WTC11 (cell line): ENCODE measurements at regions of chr1 and their contacts with region 1.

Region 1: DNA sequence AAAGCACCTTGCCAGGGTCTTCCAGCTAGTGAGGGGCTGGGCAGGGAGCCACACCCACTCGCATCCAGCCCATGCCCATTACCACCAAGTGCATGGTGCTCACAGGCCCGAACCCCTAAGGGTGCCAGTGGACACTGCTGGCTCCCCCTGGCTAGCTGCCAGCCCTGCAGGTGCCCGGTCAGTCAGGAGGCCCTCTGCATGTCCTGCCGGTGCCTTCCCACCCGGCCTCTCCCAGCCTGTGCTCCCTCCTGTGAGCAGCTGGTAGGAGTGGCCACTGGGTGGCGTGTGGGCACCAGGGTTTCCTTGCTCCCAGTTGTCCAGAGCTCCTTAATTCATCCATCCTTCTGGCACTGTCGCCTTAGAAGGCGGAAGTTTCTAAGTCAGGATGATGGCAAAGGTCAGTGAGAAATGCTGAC is 33.4 kb downstream of the QSOX1 start:
- DNase-seq: peak; percentile 81
- ATAC-seq: peak; percentile 88
- H3K4me3 Mint-ChIP-seq: no peak overlapping the region
- H3K27ac Mint-ChIP-seq: no peak overlapping the region
- H3K4me1 Mint-ChIP-seq: no peaks in the 10 kb centered on the region
- H3K27me3 Mint-ChIP-seq: no peaks in the 10 kb centered on the region
- CTCF ChIP-seq: peak; percentile 79

Region 2: DNA sequence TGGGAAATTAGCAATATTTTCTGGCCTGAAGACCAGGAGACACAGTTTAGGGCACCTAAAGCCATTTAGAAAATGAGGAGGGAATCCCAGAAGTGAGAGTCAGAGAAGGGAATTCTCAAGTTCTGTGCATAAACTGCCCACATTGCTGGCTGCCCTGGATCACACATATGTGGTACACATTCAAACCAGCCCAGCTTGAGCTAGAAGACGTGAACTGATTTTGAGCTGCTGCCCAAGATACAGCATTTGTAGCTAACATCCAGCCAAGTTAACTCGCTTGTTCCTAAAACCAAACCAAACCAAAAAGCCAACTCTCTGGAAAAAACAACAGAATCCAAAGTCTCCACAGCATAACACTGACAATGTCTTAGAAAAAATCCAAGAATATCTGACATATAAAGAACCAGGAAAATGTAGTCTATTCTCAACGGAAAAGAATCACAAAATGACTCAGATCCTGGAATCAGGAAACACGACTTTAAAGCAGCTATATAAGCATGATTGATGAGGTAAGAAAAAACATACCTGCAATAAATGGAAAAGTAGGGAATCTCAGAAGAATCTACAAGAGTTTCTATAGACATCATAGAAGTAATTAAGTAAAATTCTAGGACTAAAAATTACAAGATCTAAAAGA is 51.6 kb before region 1 on chr1:
- CTCF ChIA-PET with region 1: no interaction called
- POLR2A ChIA-PET with region 1: no interaction called
- DNase-seq: no peak
- ATAC-seq: no peak
- H3K4me3 Mint-ChIP-seq: no peak overlapping the region
- H3K27ac Mint-ChIP-seq: no peak overlapping the region
- H3K4me1 Mint-ChIP-seq: no peaks in the 10 kb centered on the region
- H3K27me3 Mint-ChIP-seq: no peaks in the 10 kb centered on the region; the same call in 1 of the 2 replicates
- CTCF ChIP-seq: no peak

Region 3: DNA sequence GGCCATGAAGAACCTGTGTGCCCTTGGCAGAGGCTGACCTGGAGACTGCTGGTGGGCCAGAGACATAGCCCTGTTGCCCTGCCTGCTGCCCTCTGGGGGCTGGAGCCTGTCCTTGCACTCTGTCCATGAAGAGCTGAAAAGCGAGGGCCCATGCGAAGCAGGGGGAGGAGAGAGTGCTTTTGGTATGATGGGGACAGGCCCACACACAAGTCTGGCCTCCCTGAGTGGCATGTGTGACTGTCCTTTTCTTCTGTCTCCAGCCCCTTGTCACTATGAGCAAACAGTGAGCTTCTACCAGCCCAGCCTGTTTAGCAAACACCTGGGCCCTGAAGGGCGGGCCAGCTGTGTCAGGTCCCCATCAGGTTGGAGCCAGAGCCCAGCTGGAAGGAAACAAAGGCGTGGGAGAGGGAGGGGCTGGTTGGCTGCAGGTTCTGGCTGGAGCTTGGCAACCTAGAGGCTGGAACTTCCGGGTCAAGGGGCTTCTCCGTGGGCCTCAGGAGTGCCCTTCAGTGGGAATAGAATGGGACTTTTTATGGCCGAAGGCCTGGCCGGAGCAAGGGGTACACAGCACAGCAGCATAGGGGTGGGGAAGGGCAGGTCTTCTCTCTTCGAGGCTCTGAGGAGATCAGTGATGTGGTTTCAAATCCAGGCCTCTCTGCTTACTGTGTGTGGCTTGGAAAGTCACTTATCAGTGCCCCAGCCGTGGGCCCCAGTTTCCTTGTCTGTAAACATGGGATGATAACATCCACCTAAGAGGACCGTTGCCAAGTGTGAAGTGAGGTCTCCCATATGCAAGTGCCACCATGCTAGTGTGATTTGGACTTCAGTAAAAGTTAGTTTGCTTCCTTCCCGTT is 19.1 kb before region 1 on chr1:
- CTCF ChIA-PET with region 1: interaction called, 140 read pairs
- POLR2A ChIA-PET with region 1: interaction called, 3 read pairs
- DNase-seq: peak; percentile 80
- ATAC-seq: peak; percentile 77
- H3K4me3 Mint-ChIP-seq: no peak overlapping the region
- H3K27ac Mint-ChIP-seq: peak overlapping the region; percentile 95
- H3K4me1 Mint-ChIP-seq: peaks cover 52% of the 10 kb centered on the region
- H3K27me3 Mint-ChIP-seq: no peaks in the 10 kb centered on the region
- CTCF ChIP-seq: peak; percentile 56

Region 4: DNA sequence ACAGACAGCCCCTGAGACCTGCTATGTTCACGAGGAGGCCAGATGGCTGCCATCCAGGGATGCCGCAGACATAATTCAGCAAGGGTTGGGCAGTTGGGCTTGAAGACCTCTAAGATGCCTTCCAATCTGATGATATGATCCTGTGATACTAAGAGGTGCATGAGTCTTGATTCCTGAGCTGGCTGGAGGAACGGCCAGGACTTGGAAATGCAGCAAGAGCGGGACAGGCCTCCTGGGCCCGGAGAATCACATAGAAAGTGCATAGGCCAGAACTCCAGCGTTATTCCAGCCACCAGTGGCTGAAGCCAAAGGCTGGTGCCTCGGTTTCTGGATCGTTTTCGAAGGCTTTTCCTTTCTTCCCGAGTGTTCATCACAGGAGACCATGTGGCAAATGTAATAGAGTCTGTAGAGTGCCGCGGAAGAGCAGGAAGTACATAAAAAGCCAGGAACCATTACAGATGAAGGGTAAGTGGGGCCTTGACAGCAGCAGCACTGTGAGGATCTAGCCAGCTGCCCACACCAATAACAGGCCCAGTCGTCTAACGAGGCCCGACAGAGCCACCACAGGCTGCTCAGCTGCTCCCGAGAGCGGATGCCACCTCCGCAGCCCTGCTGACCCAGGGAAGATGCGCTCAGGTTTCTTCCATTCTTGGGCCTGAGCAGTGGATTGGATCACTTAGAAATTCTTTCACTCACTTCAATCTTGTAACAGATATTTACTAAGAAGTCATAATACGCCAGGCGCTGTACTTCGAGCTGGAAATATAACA is 27.9 kb after region 1 on chr1:
- CTCF ChIA-PET with region 1: interaction called, 15 read pairs
- POLR2A ChIA-PET with region 1: no interaction called
- DNase-seq: no peak
- ATAC-seq: no peak
- H3K4me3 Mint-ChIP-seq: no peak overlapping the region
- H3K27ac Mint-ChIP-seq: no peak overlapping the region
- H3K4me1 Mint-ChIP-seq: peaks cover 8% of the 10 kb centered on the region
- H3K27me3 Mint-ChIP-seq: peaks cover 3% of the 10 kb centered on the region; the same call in 1 of the 2 replicates
- CTCF ChIP-seq: no peak

Region 5: GRCh38 chr1:180229152-180229973 is 41.3 kb after region 1 on chr1:
- CTCF ChIA-PET with region 1: interaction called, 34 read pairs
- POLR2A ChIA-PET with region 1: no interaction called
- DNase-seq: peak; percentile 68
- ATAC-seq: peak; percentile 29
- H3K4me3 Mint-ChIP-seq: peak overlapping the region; percentile 63
- H3K27ac Mint-ChIP-seq: no peak overlapping the region
- H3K4me1 Mint-ChIP-seq: peaks cover 41% of the 10 kb centered on the region
- H3K27me3 Mint-ChIP-seq: peaks cover 78% of the 10 kb centered on the region
- CTCF ChIP-seq: no peak

Region 6: DNA sequence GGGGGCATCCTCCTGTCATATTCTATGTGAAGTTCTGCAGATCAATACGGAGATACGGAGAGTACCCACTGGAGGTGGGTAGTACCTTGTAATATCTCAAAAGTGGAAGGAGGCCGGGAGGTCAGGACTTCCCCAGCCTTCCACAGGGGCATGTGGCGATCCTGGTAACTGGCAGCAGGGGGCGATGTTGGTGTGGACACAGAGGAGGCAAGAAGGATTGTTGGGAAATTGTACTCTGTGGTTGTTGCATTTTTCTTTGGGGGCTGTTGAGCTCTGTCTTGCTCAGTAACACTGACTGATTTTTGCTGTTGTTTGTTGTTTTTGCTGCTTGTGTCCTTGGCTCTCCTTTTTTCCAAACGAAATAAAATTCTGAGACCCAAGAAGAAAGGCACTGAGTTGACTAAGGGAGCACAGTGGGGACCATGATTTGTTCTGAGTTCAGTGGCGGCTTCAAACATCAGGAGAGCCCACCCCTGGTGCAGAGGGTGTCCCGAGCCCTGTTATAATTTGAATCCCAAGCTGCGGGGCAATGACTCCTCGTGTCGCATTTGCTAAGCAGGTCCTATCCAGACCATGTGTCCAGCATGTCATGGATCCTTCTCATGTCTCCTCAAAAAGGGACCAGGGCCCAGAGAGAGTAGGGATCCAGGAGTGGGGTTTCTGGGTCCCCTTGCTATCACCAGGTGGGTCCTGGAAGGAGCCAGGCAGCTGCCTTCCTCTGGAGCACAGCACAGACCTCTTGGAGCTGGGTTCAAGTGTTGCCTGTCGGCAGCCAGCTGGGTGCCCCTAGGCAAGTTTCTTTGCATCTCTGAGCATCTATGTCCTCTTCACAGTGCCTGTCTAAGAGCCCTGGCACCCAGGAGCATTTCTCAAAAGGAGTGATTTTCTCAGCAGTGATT is 64.8 kb after region 1 on chr1:
- CTCF ChIA-PET with region 1: interaction called, 20 read pairs
- POLR2A ChIA-PET with region 1: no interaction called
- DNase-seq: peak; percentile 92
- ATAC-seq: peak; percentile 54
- H3K4me3 Mint-ChIP-seq: no peak overlapping the region
- H3K27ac Mint-ChIP-seq: no peak overlapping the region; the same call in 1 of the 2 replicates
- H3K4me1 Mint-ChIP-seq: peaks cover 48% of the 10 kb centered on the region
- H3K27me3 Mint-ChIP-seq: no peaks in the 10 kb centered on the region
- CTCF ChIP-seq: peak; percentile 86